OCI-LY7 (cell line): ENCODE measurements at regions of chr7 and their contacts with region 1.

Region 1: DNA sequence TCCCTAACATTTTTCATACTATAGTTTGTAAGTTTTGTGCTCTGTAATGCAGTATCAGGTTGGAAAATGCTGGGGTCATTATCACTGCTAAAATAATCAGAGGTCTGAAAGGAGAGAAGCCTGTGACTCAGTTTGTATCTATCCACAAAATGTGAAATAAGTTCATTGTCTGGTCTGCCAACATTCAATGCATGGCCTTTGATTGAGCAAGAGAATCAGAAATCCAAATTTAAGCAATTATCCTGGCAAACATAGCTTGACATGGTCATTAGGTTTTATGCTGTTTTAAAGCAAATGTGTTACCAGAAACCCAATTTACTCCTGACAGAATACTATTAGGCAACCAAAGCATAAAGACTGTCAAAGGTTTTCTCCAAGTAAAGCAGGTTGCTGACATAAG is 709.7 kb upstream of the SEMA3D start:
- DNase-seq: no peak
- H3K4me3 ChIP-seq: no peak overlapping the region
- H3K27ac ChIP-seq: no peak overlapping the region
- H3K4me1 ChIP-seq: no peaks in the 10 kb centered on the region
- CTCF ChIP-seq: no peak

Region 2: DNA sequence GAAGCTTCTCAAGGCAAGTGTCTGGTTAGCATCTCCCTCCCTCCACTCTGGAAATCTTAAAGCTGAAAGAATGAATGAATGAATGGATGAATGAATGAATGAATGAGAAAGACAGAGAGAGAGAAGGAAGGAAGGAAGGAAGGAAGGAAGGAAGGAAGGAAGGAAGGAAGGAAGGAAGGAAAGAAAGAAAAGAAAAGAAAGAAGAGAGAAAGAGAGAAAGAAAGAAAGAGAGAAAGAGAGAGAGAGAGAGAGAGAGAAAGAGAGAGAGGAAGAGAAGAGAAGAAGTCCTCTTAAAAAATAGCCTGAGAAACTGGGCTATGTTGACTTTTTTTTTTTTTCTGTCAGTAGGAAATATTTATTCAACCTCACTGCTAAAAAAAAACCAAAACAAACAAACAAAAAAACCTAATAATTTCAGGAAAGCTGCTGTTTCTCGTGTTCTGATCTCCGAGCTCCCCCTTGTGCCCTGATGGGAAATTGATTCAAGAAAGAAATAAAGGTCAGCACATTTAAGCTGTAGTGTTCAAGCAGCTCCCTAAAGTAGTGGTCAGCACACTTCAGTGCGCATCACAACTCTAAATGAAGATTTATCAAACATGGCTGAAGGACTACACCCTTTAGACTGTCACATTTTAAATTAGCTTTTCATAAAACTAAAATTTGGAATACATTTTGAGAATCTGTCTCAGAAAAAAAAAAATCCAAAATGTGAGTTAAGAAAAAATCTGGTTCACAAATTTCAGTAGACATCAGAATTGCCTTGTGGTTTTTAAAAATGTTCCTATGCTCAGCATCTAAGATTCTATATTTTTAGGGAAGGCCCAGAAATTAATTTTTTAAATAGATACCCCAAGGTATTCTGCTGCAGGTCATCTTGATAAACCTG is 1008.7 kb after region 1 on chr7:
- CTCF ChIA-PET with region 1: no interaction called
- POLR2A ChIA-PET with region 1: no interaction called
- intact Hi-C with region 1: loop called (anchors 5 kb)
- DNase-seq: peak; percentile 13
- H3K4me3 ChIP-seq: no peak overlapping the region
- H3K27ac ChIP-seq: no peak overlapping the region
- H3K4me1 ChIP-seq: no peaks in the 10 kb centered on the region
- CTCF ChIP-seq: peak; percentile 81